Upper lobe of right lung (tissue), 1 donor: ENCODE measurements at regions of chr10 and their contacts with region 1.

Region 1: GRCh38 chr10:124992462-124993344 is 50.8 kb downstream of the ZRANB1 start:
- DNase-seq: peak; percentile 66
- ATAC-seq: peak; percentile 78
- H3K4me3 ChIP-seq: no peak overlapping the region
- H3K27ac ChIP-seq: no peak overlapping the region
- H3K4me1 ChIP-seq: no peaks in the 10 kb centered on the region
- H3K27me3 ChIP-seq: no peaks in the 10 kb centered on the region
- CTCF ChIP-seq: peak; percentile 71

Region 2: GRCh38 chr10:125048101-125048864 is 55.6 kb after region 1 on chr10:
- intact Hi-C with region 1: loop called (anchors 10 kb)
- DNase-seq: peak; percentile 92
- ATAC-seq: peak; percentile 95
- H3K4me3 ChIP-seq: no peak overlapping the region
- H3K27ac ChIP-seq: no peak overlapping the region
- H3K4me1 ChIP-seq: peaks cover 44% of the 10 kb centered on the region
- H3K27me3 ChIP-seq: no peaks in the 10 kb centered on the region
- CTCF ChIP-seq: peak; percentile 98

Region 3: GRCh38 chr10:125118011-125118611 is 125.4 kb after region 1 on chr10:
- intact Hi-C with region 1: no loop called
- DNase-seq: peak; percentile 50
- ATAC-seq: peak; percentile 11
- H3K4me3 ChIP-seq: no peak overlapping the region
- H3K27ac ChIP-seq: peak overlapping the region; percentile 1
- H3K4me1 ChIP-seq: peaks cover 43% of the 10 kb centered on the region
- H3K27me3 ChIP-seq: no peaks in the 10 kb centered on the region
- CTCF ChIP-seq: no peak